CD4-positive, alpha-beta memory T cell (primary cell): ENCODE measurements at regions of chr12 and their contacts with region 1.

Region 1: GRCh38 chr12:6039894-6040568 is 84.4 kb downstream of the VWF start:
- DNase-seq: peak in 4 of 5 donors; percentile 41 to 55 (median 48)
- H3K4me3 ChIP-seq: no peak overlapping the region
- H3K4me3 Mint-ChIP-seq: peak overlapping the region in 3 of 8 donors; percentile 8 to 64 (median 13)
- H3K27ac ChIP-seq: no peak overlapping the region
- H3K27ac Mint-ChIP-seq: no peak overlapping the region
- H3K4me1 ChIP-seq: no peaks in the 10 kb centered on the region
- H3K4me1 Mint-ChIP-seq: peaks cover 0 to 2% (median under 1%) of the 10 kb centered on the region in 4 donors
- H3K27me3 ChIP-seq: no peaks in the 10 kb centered on the region
- H3K27me3 Mint-ChIP-seq: peaks cover 6 to 13% of the 10 kb centered on the region in 2 donors

Region 2: GRCh38 chr12:5898876-5899275 is 141.2 kb before region 1 on chr12:
- CTCF ChIA-PET with region 1: no interaction called
- POLR2A ChIA-PET with region 1: no interaction called
- intact Hi-C with region 1: no loop called
- DNase-seq: no peak
- H3K4me3 ChIP-seq: no peak overlapping the region
- H3K4me3 Mint-ChIP-seq: no peak overlapping the region
- H3K27ac ChIP-seq: no peak overlapping the region
- H3K27ac Mint-ChIP-seq: no peak overlapping the region
- H3K4me1 ChIP-seq: no peaks in the 10 kb centered on the region
- H3K4me1 Mint-ChIP-seq: no peaks in the 10 kb centered on the region
- H3K27me3 ChIP-seq: peaks cover 4% of the 10 kb centered on the region
- H3K27me3 Mint-ChIP-seq: peaks cover 19 to 44% of the 10 kb centered on the region in 2 donors

Region 3: DNA sequence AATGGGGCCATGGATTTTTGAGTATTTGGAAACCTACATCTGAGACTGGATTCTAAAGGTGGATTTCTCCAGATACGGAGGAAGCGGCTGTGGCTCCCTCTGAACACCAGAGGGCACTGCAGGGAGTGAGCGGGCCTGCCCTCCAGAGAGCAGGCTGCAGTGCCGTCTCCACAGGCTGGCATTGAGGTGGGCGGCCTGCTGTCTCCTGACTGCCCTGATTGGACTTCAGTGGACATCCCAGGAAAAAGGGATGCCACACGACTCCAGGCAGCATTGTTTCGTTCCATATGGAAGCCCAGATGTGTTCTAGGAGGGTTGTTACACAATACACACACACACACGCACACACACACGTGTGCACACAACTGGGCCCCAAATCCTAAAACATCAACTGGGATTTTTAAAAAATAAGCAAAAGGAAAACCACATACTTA is 74.1 kb before region 1 on chr12:
- CTCF ChIA-PET with region 1: interaction called, 3 read pairs
- POLR2A ChIA-PET with region 1: no interaction called
- intact Hi-C with region 1: loop called (anchors 1 kb)
- DNase-seq: peak in 4 of 5 donors; percentile 9 to 24 (median 19)
- H3K4me3 ChIP-seq: no peak overlapping the region
- H3K4me3 Mint-ChIP-seq: no peak overlapping the region
- H3K27ac ChIP-seq: no peak overlapping the region
- H3K27ac Mint-ChIP-seq: no peak overlapping the region
- H3K4me1 ChIP-seq: no peaks in the 10 kb centered on the region
- H3K4me1 Mint-ChIP-seq: peaks cover 0 to 4% (median 1%) of the 10 kb centered on the region in 4 donors
- H3K27me3 ChIP-seq: no peaks in the 10 kb centered on the region
- H3K27me3 Mint-ChIP-seq: peaks cover 7 to 15% of the 10 kb centered on the region in 2 donors